Panc1 (cell line): ENCODE measurements at regions of chr1 and their contacts with region 1.

Region 1: GRCh38 chr1:10152709-10153284 is 57.6 kb upstream of the KIF1B start:
- DNase-seq: peak; percentile 2
- ATAC-seq: 0 out of 2 replicates have a peak, but pooled peaks have one; percentile 63
- H3K4me3 ChIP-seq: no peak overlapping the region
- H3K27ac ChIP-seq: no peak overlapping the region
- H3K4me1 ChIP-seq: no peaks in the 10 kb centered on the region
- H3K27me3 ChIP-seq: no peaks in the 10 kb centered on the region
- CTCF ChIP-seq: peak; percentile 77

Region 2: GRCh38 chr1:9597361-9598315 is 555.2 kb before region 1 on chr1:
- CTCF ChIA-PET with region 1: no interaction called
- POLR2A ChIA-PET with region 1: interaction called, 12 read pairs
- in situ Hi-C with region 1: no loop called
- intact Hi-C with region 1: no loop called
- DNase-seq: no peak
- ATAC-seq: no peak
- H3K4me3 ChIP-seq: no peak overlapping the region
- H3K27ac ChIP-seq: no peak overlapping the region
- H3K4me1 ChIP-seq: peaks cover 5% of the 10 kb centered on the region; the same call in 1 of the 2 replicates
- H3K27me3 ChIP-seq: no peaks in the 10 kb centered on the region
- CTCF ChIP-seq: no peak

Region 3: GRCh38 chr1:10192263-10192662 is 39.5 kb after region 1 on chr1:
- CTCF ChIA-PET with region 1: no interaction called
- POLR2A ChIA-PET with region 1: interaction called, 10 read pairs
- in situ Hi-C with region 1: no loop called
- intact Hi-C with region 1: no loop called
- DNase-seq: no peak
- ATAC-seq: no peak
- H3K4me3 ChIP-seq: no peak overlapping the region
- H3K27ac ChIP-seq: no peak overlapping the region
- H3K4me1 ChIP-seq: no peaks in the 10 kb centered on the region
- H3K27me3 ChIP-seq: no peaks in the 10 kb centered on the region
- CTCF ChIP-seq: no peak